ENCODE measurements at regions of chr6 and their contacts with region 1.

Region 1: GRCh38 chr6:6890400-6890858 is 217.3 kb upstream of the RREB1 start:
- DNase-seq: peak; percentile 48 to 62
- ATAC-seq: peak; percentile 30 to 72 (median 52)
- H3K4me3 ChIP-seq: peak overlapping the region in 1 of 10 donors; percentile 0
- H3K27ac ChIP-seq: peak overlapping the region in 8 of 10 donors; percentile 7 to 85 (median 78)
- H3K4me1 ChIP-seq: peaks cover 9 to 66% (median 36%) of the 10 kb centered on the region in 9 donors
- H3K27me3 ChIP-seq: no peaks in the 10 kb centered on the region
- CTCF ChIP-seq: no peak

Region 2: DNA sequence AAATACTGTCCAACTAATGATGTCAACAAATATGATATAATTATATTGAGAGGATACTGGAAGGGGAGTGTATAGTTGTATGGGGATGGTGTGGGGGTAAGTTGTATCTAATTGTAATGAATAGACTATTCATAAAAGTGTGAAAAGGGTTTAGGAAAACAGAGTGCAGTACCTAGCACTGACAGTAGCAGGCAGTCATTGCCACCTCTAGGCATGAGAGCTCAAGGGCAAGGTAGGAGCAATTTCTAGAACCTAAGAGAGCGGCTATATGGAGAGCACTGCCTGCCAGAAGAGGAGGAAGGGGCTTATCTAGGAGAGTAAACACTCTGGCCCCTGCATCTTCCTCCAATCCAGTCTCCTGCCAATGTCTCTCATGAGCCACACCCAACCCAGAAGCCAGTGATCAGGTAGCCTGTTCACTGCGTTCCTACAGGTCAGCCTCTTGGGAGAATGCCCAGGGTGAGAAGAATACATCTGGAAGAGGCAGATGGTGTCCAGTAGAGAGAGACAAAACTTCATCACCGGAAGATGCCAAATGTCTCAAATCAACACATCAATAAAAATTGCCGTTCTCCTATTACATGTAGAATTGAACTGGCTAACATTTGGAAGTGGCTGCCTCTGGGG is 101.9 kb before region 1 on chr6:
- intact Hi-C with region 1: no loop called
- DNase-seq: no peak
- ATAC-seq: peak in 1 of 8 donors; percentile 35
- H3K4me3 ChIP-seq: no peak overlapping the region
- H3K27ac ChIP-seq: no peak overlapping the region
- H3K4me1 ChIP-seq: peaks cover 0 to 14% (median 0%) of the 10 kb centered on the region in 9 donors
- H3K27me3 ChIP-seq: no peaks in the 10 kb centered on the region
- CTCF ChIP-seq: peak in 8 of 9 donors; percentile 11 to 54 (median 33)

Region 3: GRCh38 chr6:6826095-6826901 is 64.1 kb before region 1 on chr6:
- intact Hi-C with region 1: loop called in 1 of 10 experiments (anchors 10 kb)
- DNase-seq: peak; percentile 45 to 60
- ATAC-seq: peak; percentile 75 to 94 (median 88)
- H3K4me3 ChIP-seq: no peak overlapping the region
- H3K27ac ChIP-seq: peak overlapping the region; percentile 46 to 90 (median 77)
- H3K4me1 ChIP-seq: peaks cover 4 to 44% (median 22%) of the 10 kb centered on the region in 9 donors
- H3K27me3 ChIP-seq: no peaks in the 10 kb centered on the region
- CTCF ChIP-seq: no peak

Region 4: DNA sequence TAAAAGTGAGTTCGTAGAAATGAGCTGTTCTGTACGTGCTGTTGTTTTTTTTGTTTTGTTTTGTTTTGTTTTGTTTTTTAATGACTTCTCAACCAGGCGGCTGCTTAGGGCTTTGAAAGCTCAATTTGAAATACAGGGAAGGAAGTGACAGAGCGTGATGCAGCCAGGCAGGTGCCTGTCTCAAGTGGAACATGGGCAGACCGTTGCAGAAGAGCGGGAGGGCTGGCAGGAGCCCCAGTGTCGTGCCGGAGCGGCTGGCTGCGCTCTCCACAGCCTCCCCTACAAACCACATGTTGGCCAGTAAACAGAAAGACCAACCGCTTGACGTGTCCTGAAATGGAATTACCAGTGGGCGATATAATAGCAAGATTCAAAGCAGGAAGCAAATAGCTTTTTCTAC is 52.4 kb after region 1 on chr6:
- intact Hi-C with region 1: no loop called
- DNase-seq: peak; percentile 47 to 62
- ATAC-seq: peak; percentile 86 to 99 (median 94)
- H3K4me3 ChIP-seq: peak overlapping the region in 6 of 10 donors; percentile 8 to 24 (median 20)
- H3K27ac ChIP-seq: peak overlapping the region in 3 of 10 donors; percentile 12 to 64 (median 30)
- H3K4me1 ChIP-seq: peaks cover 0 to 12% (median 0%) of the 10 kb centered on the region in 9 donors
- H3K27me3 ChIP-seq: no peaks in the 10 kb centered on the region
- CTCF ChIP-seq: no peak

Region 5: DNA sequence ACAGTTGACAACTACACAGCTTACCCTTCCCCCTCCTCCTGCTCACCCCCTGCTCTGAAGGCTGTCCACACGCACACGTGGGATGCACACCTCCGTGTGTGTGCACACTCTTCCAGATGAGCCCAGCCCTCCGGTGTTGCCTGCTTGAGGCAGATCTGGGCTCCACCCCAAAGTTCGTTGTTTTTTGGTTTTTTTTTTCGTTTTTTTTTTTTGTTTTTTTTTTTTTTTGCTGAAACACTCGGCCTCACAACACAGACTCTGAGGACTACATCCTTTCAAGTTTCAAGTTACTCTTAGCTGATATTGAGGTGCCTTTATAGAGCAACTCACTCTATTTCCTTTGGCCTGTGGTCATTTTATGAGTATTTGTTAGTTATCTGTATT is 305.6 kb after region 1 on chr6:
- intact Hi-C with region 1: no loop called
- DNase-seq: no peak
- ATAC-seq: peak in 6 of 8 donors; percentile 45 to 66 (median 51)
- H3K4me3 ChIP-seq: no peak overlapping the region
- H3K27ac ChIP-seq: no peak overlapping the region
- H3K4me1 ChIP-seq: peaks cover 0 to 21% (median 11%) of the 10 kb centered on the region in 9 donors
- H3K27me3 ChIP-seq: no peaks in the 10 kb centered on the region
- CTCF ChIP-seq: no peak

Measured in heart right ventricle (tissue), 16 donors.